Activated T-helper 1 cell treated with anti-CD3 and anti-CD28 coated beads, Interleukin-12 subunit alpha, Interleukin-12 subunit beta, Interleukin-2, Interleukin-4 antibody, amounts not matched to agents 30 ng/mL and 10 ng/mL and 1 ng/mL, durations not matched to agents 14 hours and 24 hours and 36 hours (primary cell): ENCODE measurements at regions of chr10 and their contacts with region 1.

Region 1: DNA sequence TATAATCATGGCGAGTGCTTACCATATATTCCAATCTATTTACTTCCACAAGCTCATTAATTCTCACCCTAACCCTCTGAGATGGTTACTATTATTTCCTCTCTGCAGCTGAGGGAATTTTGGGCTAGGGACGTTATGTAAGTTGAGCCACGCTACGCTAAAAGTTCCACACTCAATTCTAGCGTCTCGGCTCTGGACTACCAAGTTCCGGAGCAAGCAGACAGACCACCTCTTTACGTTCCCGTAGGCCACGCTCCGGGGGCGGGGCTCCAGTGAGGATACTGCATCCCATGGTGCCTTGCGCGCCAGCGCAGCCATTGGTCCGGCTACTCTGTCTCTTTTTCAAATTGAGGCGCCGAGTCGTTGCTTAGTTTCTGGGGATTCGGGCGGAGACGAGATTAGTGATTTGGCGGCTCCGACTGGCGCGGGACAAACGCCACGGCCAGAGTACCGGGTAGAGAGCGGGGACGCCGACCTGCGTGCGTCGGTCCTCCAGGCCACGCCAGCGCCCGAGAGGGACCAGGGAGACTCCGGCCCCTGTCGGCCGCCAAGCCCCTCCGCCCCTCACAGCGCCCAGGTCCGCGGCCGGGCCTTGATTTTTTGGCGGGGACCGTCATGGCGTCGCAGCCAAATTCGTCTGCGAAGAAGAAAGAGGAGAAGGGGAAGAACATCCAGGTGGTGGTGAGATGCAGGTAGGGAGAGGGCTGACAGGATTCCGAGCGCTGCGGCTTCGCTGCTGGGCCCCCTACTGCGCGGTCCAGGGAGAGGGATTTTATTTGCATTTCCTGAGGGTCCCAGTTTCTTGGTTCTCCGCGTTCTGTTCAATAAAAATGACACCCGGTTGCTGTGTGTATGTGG is at the start of gene KIF11:
- DNase-seq: peak; percentile 95
- H3K4me3 Mint-ChIP-seq: peak within 1 kb of the TSS; percentile 96
- H3K27ac Mint-ChIP-seq: peak within 1 kb of the TSS; percentile 97
- H3K4me1 Mint-ChIP-seq: peaks cover 58% of the 10 kb centered on the region
- H3K27me3 Mint-ChIP-seq: no peaks in the 10 kb centered on the region
- total RNA-seq, gene KIF11: 37.3 and 38.7 TPM in 2 replicates

Region 2: DNA sequence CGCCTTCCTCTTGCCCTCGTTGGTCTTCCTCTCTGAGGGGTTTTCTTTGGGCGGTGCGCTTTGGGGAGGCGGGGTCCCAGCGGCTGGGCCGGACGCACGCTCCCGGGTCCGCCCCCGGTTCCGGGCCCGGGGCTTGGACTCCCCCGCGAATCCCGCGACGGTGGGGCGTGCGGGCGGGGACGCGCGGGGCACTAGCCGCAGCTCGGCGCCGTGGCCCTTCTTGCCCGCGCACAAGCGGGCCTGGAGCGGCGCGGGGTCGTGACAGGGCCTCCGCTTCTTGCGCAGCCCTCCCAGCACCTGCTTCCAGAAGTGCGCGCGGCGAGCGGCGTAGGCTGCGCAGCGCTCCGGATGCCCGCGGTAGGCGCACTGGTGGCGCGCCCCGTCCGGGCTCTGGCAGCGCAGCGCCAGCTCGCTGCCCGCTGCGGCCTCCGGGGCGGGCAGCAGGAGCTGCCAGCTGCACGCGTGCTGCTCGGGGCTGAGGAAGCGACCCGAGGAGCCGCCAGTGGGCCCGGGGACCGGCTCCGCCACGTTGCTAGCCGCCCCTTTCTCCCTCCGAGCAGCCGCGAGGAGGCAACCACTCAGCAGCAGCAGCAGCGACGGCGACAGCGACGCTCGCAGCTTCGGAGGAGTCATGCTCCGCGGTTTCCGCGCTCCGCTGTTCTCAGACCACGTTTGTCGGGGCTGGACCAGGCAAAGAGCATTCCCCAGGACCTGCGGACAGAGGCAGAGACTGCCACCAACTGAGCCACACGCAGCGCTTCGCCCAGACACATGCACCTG is 684.5 kb before region 1 on chr10:
- intact Hi-C with region 1: loop called (anchors 5 kb)
- DNase-seq: peak; percentile 65
- H3K4me3 Mint-ChIP-seq: peak overlapping the region; percentile 87
- H3K27ac Mint-ChIP-seq: peak overlapping the region; percentile 82
- H3K4me1 Mint-ChIP-seq: peaks cover 29% of the 10 kb centered on the region
- H3K27me3 Mint-ChIP-seq: peaks cover 14% of the 10 kb centered on the region

Region 3: DNA sequence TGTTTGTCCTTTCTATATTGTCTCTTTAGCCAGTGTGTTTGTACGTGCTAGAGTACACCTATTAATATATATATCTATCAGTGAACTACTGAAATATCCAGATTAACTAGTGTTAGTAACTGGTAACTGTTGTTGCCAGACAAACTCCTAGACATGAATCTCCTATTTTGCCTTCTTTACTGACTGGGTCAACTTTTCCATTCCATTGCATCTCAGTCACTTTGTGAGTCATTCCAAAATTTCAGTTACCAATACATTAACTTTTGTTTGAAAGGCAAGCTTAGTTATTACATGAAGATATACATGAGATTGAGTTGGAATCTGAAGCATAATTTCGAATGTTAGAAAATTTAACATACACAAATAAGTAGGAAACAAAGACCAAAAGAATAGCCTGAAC is 618.0 kb before region 1 on chr10:
- intact Hi-C with region 1: loop called (anchors 5 kb)
- DNase-seq: no peak
- H3K4me3 Mint-ChIP-seq: peak overlapping the region; percentile 16
- H3K27ac Mint-ChIP-seq: peak overlapping the region; percentile 83
- H3K4me1 Mint-ChIP-seq: peaks cover 65% of the 10 kb centered on the region
- H3K27me3 Mint-ChIP-seq: no peaks in the 10 kb centered on the region

Region 4: GRCh38 chr10:92517034-92517655 is 75.8 kb before region 1 on chr10:
- intact Hi-C with region 1: loop called (anchors 1 kb)
- DNase-seq: peak; percentile 48
- H3K4me3 Mint-ChIP-seq: no peak overlapping the region
- H3K27ac Mint-ChIP-seq: no peak overlapping the region
- H3K4me1 Mint-ChIP-seq: peaks cover 8% of the 10 kb centered on the region
- H3K27me3 Mint-ChIP-seq: no peaks in the 10 kb centered on the region

Region 5: GRCh38 chr10:92627845-92628480 is 35.0 kb after region 1 on chr10:
- intact Hi-C with region 1: loop called (anchors 5 kb)
- DNase-seq: no peak
- H3K4me3 Mint-ChIP-seq: no peak overlapping the region
- H3K27ac Mint-ChIP-seq: no peak overlapping the region
- H3K4me1 Mint-ChIP-seq: peaks cover 2% of the 10 kb centered on the region
- H3K27me3 Mint-ChIP-seq: no peaks in the 10 kb centered on the region

Region 6: DNA sequence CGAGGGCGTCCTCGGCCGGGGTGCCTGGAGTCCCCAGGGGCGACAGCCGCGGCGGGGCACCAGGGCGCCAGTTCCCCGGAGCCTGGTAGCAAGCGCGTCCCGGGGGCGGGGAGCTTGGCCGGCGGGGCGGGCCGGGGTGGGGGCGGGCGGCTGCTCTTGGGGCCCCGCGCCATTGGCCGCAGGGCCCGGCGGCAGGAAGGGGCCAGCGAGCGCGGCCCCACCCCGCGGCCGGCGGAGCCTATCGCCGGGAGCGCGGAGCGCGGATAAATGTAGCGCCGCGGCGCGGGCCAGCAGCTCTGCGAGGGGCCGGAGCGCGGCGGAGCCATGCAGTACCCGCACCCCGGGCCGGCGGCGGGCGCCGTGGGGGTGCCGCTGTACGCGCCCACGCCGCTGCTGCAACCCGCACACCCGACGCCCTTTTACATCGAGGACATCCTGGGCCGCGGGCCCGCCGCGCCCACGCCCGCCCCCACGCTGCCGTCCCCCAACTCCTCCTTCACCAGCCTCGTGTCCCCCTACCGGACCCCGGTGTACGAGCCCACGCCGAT is 96.7 kb after region 1 on chr10 and contains the start of gene HHEX:
- intact Hi-C with region 1: loop called (anchors 2 kb)
- DNase-seq: no peak
- H3K4me3 Mint-ChIP-seq: peak within 1 kb of the TSS; percentile 73
- H3K27ac Mint-ChIP-seq: peak within 1 kb of the TSS; percentile 55
- H3K4me1 Mint-ChIP-seq: peaks cover 23% of the 10 kb centered on the region
- H3K27me3 Mint-ChIP-seq: peaks cover 82% of the 10 kb centered on the region
- total RNA-seq, gene HHEX: 0.16 and 0.32 TPM in 2 replicates

Region 7: DNA sequence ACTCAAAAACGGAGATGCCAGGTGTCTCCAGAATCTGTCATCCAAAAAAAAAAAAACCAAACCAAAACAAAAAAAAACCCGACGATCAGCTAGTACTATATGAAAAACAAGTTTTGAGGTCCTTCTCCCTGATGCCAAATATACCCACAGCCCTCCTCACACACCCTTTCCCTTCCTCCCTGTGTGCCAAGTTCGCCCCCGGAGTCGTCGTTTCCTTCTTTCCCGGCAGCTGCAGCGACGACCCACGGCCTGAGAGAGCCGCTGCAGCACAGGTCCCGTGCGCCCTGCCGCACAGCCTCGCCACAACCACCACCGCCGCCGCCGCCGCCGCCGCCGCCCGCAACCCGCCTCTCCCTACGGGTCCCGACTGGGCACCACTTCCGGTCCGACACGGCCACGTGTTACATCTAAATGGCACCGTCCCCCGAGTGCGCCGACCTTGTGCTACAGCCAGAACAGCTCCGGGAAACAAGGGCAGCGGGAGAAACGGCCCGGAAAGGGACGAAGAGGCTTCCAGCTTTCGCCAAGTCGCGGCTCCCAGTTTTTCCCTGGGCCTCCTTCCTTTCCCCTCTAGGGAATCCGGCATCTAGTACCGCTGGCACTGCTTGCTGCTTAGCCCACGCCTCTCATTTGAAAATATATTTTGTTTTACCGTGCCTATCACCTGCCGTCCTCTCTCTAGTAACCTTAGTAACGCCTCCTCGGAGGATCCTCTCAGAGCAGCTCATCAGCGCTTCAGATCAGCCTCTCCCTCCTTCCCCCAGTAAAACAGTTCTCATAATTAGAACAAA is 1109.4 kb after region 1 on chr10 and contains the start of gene FRA10AC1:
- intact Hi-C with region 1: loop called (anchors 5 kb)
- DNase-seq: peak; percentile 86
- H3K4me3 Mint-ChIP-seq: no peak within 1 kb of the TSS
- H3K27ac Mint-ChIP-seq: no peak within 1 kb of the TSS
- H3K4me1 Mint-ChIP-seq: peaks cover 19% of the 10 kb centered on the region
- H3K27me3 Mint-ChIP-seq: no peaks in the 10 kb centered on the region
- total RNA-seq, gene FRA10AC1: 25.9 and 28.2 TPM in 2 replicates